ENCODE measurements at regions of chr17 and their contacts with region 1.

Region 1: DNA sequence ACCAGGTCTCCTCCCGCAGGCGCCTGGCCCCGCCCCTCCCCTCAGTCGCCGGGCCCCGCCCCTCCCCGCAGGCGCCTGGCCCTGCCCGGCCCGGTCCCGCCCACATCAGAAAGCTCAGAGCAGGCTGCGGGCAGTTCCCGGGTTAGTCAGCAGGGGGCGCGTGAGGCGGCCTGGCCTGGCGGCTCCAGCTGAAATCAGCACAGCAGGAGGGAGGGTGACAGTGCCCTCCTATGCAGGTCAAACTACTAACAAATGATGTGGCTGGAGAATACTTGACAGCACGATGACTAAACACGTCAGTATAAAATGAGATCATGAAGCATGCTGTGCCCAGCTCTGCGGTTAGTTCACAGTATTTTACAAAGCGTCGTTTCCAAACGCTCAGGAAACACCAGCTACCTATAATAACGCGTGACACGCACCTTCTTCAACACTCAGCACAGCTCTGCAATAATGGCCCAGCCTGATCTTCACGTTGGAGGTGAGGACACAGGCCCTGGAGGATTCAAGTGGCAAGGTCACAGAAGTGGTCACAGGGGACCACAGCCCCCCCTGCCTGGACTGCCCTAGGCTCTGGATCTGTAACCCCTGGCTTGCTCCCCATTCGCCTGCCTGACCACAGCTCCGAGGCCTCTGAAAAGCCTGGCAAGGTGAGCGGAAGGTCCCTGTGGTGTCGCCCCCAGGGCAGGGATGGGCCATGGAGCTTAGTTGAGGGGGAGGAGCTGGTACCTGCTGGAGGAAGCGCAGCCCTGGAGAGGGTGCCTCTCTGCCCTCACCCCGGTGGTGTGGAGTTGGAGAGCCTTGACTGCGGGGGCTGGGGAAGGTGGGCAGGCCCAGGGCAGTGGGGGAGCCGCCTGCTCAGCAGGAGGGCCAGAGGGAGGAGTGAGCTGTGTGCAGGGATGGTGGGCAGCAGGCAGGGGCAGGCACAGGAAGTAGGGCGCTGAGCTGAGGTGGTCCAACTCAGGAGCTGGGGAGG is 81.2 kb downstream of the KCNJ12 start:
- DNase-seq: peak; percentile 91
- H3K4me3 ChIP-seq: no peak overlapping the region
- H3K27ac ChIP-seq: no peak overlapping the region
- H3K4me1 ChIP-seq: peaks cover 16% of the 10 kb centered on the region
- H3K27me3 ChIP-seq: peaks cover 7% of the 10 kb centered on the region
- CTCF ChIP-seq: peak; percentile 98

Region 2: GRCh38 chr17:21284319-21285163 is 172.8 kb before region 1 on chr17 and contains the start of gene MAP2K3:
- intact Hi-C with region 1: loop called (anchors 10 kb)
- DNase-seq: peak; percentile 99
- H3K4me3 ChIP-seq: peak within 1 kb of the TSS; percentile 85
- H3K27ac ChIP-seq: peak within 1 kb of the TSS; percentile 97
- H3K4me1 ChIP-seq: peaks cover 81% of the 10 kb centered on the region
- H3K27me3 ChIP-seq: no peaks in the 10 kb centered on the region
- CTCF ChIP-seq: no peak
- total RNA-seq, gene MAP2K3: 41.7 TPM

Region 3: DNA sequence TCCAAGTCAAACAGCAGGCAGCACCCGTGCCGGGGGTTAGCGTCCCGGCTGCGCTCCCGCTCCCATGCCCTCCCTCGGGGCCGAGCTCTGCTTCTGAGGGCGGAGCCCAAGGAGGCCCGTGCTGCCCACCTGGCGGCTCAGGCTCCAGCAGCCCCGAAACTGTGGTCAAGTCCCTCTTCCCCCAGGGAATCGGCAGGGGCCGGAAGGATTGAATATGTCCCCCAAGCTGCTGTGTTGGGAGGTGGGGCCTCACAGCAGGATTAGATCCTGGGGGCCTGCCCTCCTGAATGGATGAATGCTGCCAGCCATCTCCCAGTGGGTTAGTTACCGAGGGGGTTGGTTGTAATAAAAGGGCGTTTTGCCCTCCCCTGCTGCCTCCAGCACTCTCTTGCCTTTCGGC is 138.9 kb before region 1 on chr17:
- intact Hi-C with region 1: no loop called
- DNase-seq: no peak
- H3K4me3 ChIP-seq: no peak overlapping the region
- H3K27ac ChIP-seq: no peak overlapping the region
- H3K4me1 ChIP-seq: peaks cover 13% of the 10 kb centered on the region
- H3K27me3 ChIP-seq: no peaks in the 10 kb centered on the region
- CTCF ChIP-seq: no peak

Region 4: GRCh38 chr17:21345236-21345635 is 112.1 kb before region 1 on chr17:
- intact Hi-C with region 1: no loop called
- DNase-seq: no peak
- H3K4me3 ChIP-seq: no peak overlapping the region
- H3K27ac ChIP-seq: no peak overlapping the region
- H3K4me1 ChIP-seq: peaks cover 14% of the 10 kb centered on the region
- H3K27me3 ChIP-seq: no peaks in the 10 kb centered on the region
- CTCF ChIP-seq: no peak

Region 5: DNA sequence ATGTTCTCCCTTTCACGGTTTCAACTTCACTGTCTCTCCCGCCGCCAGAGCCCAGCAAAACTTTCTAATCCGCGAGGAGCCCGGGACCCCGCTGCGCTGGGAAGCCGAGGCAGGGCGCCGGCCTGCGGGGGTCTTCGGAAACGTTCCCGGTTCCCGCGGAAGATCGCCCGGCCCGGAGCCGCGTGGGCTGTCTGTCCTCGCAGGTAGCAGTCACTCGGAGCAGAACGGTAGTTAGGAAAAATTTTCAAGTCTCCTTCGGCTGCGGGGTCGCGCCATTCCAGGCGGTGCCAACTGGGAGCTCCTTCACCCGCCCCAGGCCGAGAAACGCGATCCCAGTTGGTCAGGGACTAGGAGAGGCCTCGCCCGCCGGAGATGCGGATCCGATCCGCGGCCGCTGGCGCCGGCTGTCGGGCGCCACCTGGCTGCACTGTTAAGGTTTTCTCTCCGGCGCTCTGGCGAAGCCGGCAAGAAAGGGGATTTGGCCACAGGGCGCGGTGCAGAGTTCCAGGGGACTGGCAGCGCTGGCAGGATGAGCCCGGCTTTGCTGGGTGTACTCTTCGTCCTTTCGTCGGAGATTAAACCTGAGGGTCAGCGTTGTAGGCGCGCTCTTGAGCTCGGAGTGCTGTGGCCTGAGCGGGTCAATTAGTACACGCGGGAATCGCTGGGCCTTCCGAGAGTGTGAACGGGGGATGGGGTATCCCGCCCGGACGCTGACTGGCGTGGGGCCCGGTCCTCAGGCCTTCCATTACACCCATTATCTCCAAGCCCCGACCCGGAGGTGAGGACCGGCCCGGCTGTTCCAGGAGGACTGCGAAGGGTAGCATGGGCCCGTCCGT is 54.2 kb after region 1 on chr17:
- intact Hi-C with region 1: loop called (anchors 5 kb)
- DNase-seq: peak; percentile 86
- H3K4me3 ChIP-seq: peak overlapping the region; percentile 77
- H3K27ac ChIP-seq: peak overlapping the region; percentile 79
- H3K4me1 ChIP-seq: peaks cover 16% of the 10 kb centered on the region
- H3K27me3 ChIP-seq: peaks cover 10% of the 10 kb centered on the region
- CTCF ChIP-seq: peak; percentile 89

Region 6: DNA sequence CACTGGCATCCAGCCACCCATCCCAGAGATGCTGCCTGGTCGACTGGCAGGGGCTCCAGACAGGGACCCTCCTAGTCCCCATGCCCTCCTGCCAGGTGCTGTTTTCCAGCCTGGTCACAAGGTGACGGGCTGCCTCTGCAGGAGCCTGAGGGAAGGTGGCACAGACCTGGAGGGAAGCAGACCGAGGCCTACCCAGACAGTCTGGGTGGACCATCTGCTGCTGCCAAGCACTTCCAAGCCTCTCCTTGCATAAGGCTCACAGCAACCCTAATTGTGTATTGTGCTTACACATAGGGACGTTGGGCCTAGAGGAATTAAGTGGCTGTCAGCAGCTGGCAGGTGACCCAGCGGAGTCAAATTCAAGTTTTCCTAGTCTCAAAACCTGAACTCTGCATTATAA is 144.8 kb after region 1 on chr17:
- intact Hi-C with region 1: no loop called
- DNase-seq: no peak
- H3K4me3 ChIP-seq: no peak overlapping the region
- H3K27ac ChIP-seq: no peak overlapping the region
- H3K4me1 ChIP-seq: no peaks in the 10 kb centered on the region
- H3K27me3 ChIP-seq: peaks cover 36% of the 10 kb centered on the region
- CTCF ChIP-seq: no peak

Measured in left ventricle myocardium inferior (tissue), 1 donor.